GM12878 (cell line): ENCODE measurements at regions of chr2 and their contacts with region 1.

Region 1: DNA sequence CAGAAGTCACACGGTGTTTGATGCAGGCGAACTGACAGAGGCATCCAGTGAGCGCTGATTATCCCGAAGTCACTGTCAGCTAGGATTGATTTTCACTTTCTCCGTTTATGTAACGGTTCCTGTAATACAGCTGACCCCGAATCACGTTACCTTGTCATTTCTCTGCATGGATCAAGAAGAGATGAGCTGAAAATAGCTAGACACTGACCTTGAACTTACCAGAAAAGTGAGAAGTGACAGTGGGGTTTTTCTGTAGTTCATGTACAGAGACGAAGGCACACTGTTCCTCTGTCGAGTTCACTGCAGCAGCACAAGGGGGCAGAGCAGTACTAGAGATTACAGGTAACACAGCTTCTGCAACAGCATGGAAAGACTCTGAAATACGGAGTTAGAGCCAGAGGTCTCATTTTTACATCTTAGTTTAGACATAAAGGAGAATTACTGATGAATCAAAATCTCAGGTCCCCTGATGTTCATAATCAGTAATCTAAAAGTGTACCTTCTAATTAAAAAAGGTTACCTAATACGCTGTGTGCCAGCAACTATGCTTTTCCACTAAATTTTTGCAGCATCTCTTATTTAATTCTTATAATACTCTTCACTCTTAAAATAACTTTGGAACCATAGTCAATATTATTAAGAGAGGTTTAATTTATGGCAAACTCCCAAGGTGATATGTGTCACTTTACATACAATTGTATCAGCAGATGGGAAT is 33.1 kb downstream of the ARHGAP15 start:
- DNase-seq: no peak
- ATAC-seq: peak; percentile 96
- H3K4me3 ChIP-seq: no peak overlapping the region
- H3K27ac ChIP-seq: no peak overlapping the region
- H3K4me1 ChIP-seq: peaks cover 6% of the 10 kb centered on the region
- H3K27me3 ChIP-seq: no peaks in the 10 kb centered on the region
- CTCF ChIP-seq: peak; percentile 70 to 77 (median 73); a peak in 5 of 6 replicates
- EP300 ChIP-seq: no peak
- POLR2A ChIP-seq: no peak
- RAD21 ChIP-seq: peak; percentile 96

Region 2: DNA sequence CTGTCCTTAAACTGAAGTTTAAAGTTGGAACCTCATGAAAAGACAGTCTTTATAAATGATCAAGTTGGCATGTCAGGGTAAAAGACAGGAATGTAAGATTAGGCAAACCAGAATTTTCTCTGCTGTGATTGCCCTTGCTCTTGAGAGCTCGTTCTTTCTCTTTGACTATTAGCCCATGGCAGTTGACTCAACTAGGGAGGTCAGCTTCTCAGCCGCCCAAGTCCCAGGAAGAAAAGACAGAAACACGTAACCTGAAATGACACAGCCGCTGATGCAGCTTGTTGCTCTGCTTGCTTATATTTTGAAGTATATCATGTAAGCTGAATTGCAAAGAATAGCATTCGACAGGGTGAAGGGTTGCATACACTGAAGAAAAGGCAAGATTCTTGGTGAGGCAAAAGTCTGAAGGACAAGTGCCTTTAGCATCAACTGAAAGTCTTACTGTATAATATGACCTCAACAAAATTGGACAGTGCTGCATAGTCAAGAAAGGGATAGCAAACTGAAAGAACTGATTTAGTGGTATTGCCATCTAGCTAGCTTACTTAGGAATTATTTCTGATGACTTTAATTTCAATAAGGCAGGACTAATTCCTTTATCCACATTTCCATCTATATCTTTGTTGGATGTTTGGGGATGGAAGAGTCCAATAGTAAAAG is 21.7 kb after region 1 on chr2:
- CTCF ChIA-PET with region 1: interaction called, 12 read pairs
- POLR2A ChIA-PET with region 1: no interaction called
- RAD21 ChIA-PET with region 1: interaction called, 4 read pairs
- SMC1A ChIA-PET with region 1: interaction called, 5 read pairs
- in situ Hi-C with region 1: no loop called
- intact Hi-C with region 1: no loop called
- DNase-seq: peak; percentile 27
- ATAC-seq: peak; percentile 80
- H3K4me3 ChIP-seq: no peak overlapping the region
- H3K27ac ChIP-seq: peak overlapping the region; percentile 6; the same call in 1 of the 2 replicates
- H3K4me1 ChIP-seq: peaks cover 9% of the 10 kb centered on the region
- H3K27me3 ChIP-seq: no peaks in the 10 kb centered on the region
- CTCF ChIP-seq: no peak
- EP300 ChIP-seq: no peak
- POLR2A ChIP-seq: no peak
- RAD21 ChIP-seq: no peak

Region 3: DNA sequence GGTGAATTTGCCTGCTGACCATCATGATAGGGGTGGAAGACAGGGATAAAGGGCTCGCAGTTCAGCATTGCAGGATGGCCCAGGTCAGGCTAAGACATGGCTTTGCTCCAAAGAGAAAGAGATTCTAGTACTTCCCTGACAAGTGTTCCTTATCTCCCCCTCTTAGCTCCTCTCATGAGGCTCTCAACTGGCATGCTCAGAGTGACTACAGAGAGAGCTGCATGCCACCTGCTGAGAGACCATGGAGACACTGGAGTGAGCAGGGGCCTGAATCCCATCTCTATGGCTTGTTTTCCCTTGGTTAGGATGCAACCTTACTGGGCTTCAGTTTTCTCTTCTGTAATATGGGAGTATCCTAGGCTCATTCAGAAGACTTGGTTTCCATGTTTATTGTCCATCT is 61.3 kb after region 1 on chr2:
- CTCF ChIA-PET with region 1: interaction called, 47 read pairs
- POLR2A ChIA-PET with region 1: no interaction called
- RAD21 ChIA-PET with region 1: interaction called, 25 read pairs
- SMC1A ChIA-PET with region 1: interaction called, 40 read pairs
- in situ Hi-C with region 1: no loop called
- intact Hi-C with region 1: loop called (anchors 1 kb)
- DNase-seq: no peak
- ATAC-seq: no peak
- H3K4me3 ChIP-seq: no peak overlapping the region
- H3K27ac ChIP-seq: no peak overlapping the region
- H3K4me1 ChIP-seq: no peaks in the 10 kb centered on the region
- H3K27me3 ChIP-seq: no peaks in the 10 kb centered on the region
- CTCF ChIP-seq: no peak
- EP300 ChIP-seq: no peak
- POLR2A ChIP-seq: no peak
- RAD21 ChIP-seq: no peak

Region 4: GRCh38 chr2:143254110-143254509 is 91.8 kb after region 1 on chr2:
- CTCF ChIA-PET with region 1: interaction called, 82 read pairs
- POLR2A ChIA-PET with region 1: no interaction called
- RAD21 ChIA-PET with region 1: interaction called, 32 read pairs
- SMC1A ChIA-PET with region 1: interaction called, 28 read pairs
- in situ Hi-C with region 1: no loop called
- intact Hi-C with region 1: loop called (anchors 1 kb)
- DNase-seq: no peak
- ATAC-seq: no peak
- H3K4me3 ChIP-seq: no peak overlapping the region
- H3K27ac ChIP-seq: no peak overlapping the region
- H3K4me1 ChIP-seq: peaks cover 10% of the 10 kb centered on the region; the same call in 1 of the 2 replicates
- H3K27me3 ChIP-seq: no peaks in the 10 kb centered on the region
- CTCF ChIP-seq: no peak
- EP300 ChIP-seq: no peak
- POLR2A ChIP-seq: no peak
- RAD21 ChIP-seq: no peak